Gastrocnemius medialis (tissue), 4 donors: ENCODE measurements at regions of chr22 and their contacts with region 1.

Region 1: DNA sequence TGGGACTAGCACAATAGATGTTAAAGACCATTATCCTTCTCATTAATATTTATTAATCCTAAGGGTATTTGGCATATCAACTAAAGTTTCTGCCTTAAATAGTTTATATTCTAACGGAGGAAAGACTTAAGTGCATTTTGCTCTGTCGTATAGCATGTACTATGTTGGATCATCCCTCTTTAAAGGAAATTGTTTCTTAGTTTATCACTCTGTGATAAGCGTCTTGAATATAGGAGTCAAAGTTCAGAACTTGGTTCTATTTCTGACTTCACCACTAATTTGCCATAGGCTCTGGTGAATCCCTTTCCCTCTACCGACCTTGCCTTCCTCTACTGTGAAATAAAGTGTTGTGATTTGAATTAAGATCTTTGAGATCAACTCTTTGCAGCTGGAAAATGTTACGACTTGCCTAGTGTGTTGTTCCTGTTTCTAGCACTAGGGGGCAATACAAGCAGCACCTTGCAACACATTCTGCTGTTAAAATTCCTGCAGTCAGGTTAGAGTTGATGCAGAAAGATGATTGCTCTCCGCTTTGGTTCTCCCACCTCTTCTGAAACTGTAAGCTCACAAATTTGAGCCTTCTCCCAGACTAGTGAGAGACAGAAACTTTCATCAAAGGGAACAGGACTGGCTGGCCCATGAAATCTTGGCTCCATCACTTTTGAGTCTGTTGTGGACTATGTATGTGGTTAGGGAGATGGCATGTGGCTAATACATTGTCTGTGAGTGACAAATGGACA is 27.8 kb upstream of the ZNRF3 start:
- DNase-seq: peak in 1 of 2 donors; percentile 24
- ATAC-seq: peak; percentile 68 to 73
- H3K4me3 ChIP-seq: no peak overlapping the region
- H3K27ac ChIP-seq: no peak overlapping the region
- H3K4me1 ChIP-seq: peaks cover 13% of the 10 kb centered on the region in 2 donors
- H3K27me3 ChIP-seq: no peaks in the 10 kb centered on the region
- CTCF ChIP-seq: peak; percentile 91 to 92 (median 92)
- POLR2A ChIP-seq: no peak

Region 2: GRCh38 chr22:28570691-28571373 is 284.7 kb before region 1 on chr22:
- in situ Hi-C with region 1: no loop called
- intact Hi-C with region 1: no loop called
- DNase-seq: no peak
- ATAC-seq: no peak
- H3K4me3 ChIP-seq: no peak overlapping the region
- H3K27ac ChIP-seq: no peak overlapping the region
- H3K4me1 ChIP-seq: no peaks in the 10 kb centered on the region
- H3K27me3 ChIP-seq: no peaks in the 10 kb centered on the region
- CTCF ChIP-seq: no peak
- POLR2A ChIP-seq: no peak

Region 3: GRCh38 chr22:28951969-28952521 is 96.5 kb after region 1 on chr22:
- in situ Hi-C with region 1: no loop called
- intact Hi-C with region 1: loop called (anchors 1 kb)
- DNase-seq: no peak
- ATAC-seq: peak; percentile 63 to 66
- H3K4me3 ChIP-seq: no peak overlapping the region
- H3K27ac ChIP-seq: peak overlapping the region; percentile 13 to 65 (median 22)
- H3K4me1 ChIP-seq: peaks cover 50 to 54% of the 10 kb centered on the region in 2 donors
- H3K27me3 ChIP-seq: no peaks in the 10 kb centered on the region
- CTCF ChIP-seq: peak in 2 of 5 experiments; percentile 11 to 27
- POLR2A ChIP-seq: no peak

Region 4: GRCh38 chr22:29040385-29041275 is 185.1 kb after region 1 on chr22:
- in situ Hi-C with region 1: loop called (anchors 5 kb)
- intact Hi-C with region 1: loop called (anchors 1 kb)
- DNase-seq: peak; percentile 41 to 44
- ATAC-seq: peak; percentile 53 to 82
- H3K4me3 ChIP-seq: no peak overlapping the region
- H3K27ac ChIP-seq: no peak overlapping the region
- H3K4me1 ChIP-seq: peaks cover 0 to 10% of the 10 kb centered on the region in 2 donors
- H3K27me3 ChIP-seq: no peaks in the 10 kb centered on the region
- CTCF ChIP-seq: peak; percentile 93 to 98 (median 95)
- POLR2A ChIP-seq: no peak

Region 5: GRCh38 chr22:29245637-29246385 is 390.3 kb after region 1 on chr22:
- in situ Hi-C with region 1: loop called in 2 of 4 experiments (anchors 10 kb)
- intact Hi-C with region 1: loop called (anchors 10 kb)
- DNase-seq: peak; percentile 53 to 63
- ATAC-seq: peak; percentile 76 to 91
- H3K4me3 ChIP-seq: no peak overlapping the region
- H3K27ac ChIP-seq: no peak overlapping the region
- H3K4me1 ChIP-seq: no peaks in the 10 kb centered on the region
- H3K27me3 ChIP-seq: no peaks in the 10 kb centered on the region
- CTCF ChIP-seq: peak; percentile 84 to 97 (median 92)
- POLR2A ChIP-seq: no peak